Activated T-helper 1 cell treated with anti-CD3 and anti-CD28 coated beads, Interleukin-12 subunit alpha, Interleukin-12 subunit beta, Interleukin-2, Interleukin-4 antibody, amounts not matched to agents 30 ng/mL and 10 ng/mL and 1 ng/mL, durations not matched to agents 14 hours and 24 hours and 36 hours (primary cell): ENCODE measurements at regions of chr5 and their contacts with region 1.

Region 1: GRCh38 chr5:149317281-149318048 is 27.8 kb upstream of the GRPEL2 start:
- DNase-seq: no peak
- H3K4me3 Mint-ChIP-seq: no peak overlapping the region
- H3K27ac Mint-ChIP-seq: no peak overlapping the region
- H3K4me1 Mint-ChIP-seq: no peaks in the 10 kb centered on the region
- H3K27me3 Mint-ChIP-seq: no peaks in the 10 kb centered on the region

Region 2: DNA sequence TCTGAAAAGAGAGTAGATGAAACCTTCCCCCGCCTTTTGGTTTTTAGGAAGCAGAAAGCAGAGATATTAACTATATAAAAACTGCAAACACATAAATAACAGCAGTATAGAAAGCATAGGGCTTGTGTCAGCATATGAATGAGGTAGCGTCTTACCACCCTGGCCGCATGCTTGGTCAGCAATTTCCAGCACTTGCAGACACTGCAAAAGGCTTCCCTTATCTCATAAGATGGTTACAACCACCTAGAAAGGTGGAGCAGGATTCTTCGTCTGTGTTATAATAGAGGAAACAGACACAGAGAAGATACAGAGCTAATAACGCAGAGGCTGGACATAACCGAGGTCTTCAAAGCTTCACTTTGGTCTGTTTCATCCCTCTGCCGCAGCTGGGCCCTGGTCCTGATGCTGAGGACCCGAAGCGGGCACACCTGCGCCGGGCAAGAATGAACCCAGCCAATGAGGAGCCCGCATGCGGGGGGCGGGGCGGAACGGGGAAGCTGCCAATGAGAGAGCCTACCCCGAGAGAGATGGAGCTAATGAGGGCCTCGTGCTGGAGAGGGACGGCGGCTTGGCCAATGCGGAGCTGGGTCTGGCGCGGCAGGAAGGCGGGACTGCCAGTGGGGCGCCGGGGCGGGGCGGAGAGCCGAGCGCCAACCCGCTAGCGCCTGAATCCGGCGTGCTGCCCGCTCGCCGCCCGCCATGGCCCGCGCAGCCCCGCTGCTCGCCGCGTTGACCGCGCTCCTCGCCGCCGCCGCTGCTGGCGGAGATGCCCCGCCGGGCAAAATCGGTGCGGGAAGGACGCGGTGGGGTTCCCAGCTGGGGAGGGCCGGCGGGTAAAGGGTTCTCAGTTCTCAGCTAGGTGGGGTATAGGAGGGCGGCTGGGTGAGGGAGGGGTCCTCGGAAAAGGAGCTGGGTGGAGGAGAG is 40.2 kb after region 1 on chr5 and contains the start of gene PCYOX1L:
- intact Hi-C with region 1: loop called (anchors 1 kb)
- DNase-seq: peak; percentile 97
- H3K4me3 Mint-ChIP-seq: peak within 1 kb of the TSS; percentile 93
- H3K27ac Mint-ChIP-seq: peak within 1 kb of the TSS; percentile 84
- H3K4me1 Mint-ChIP-seq: peaks cover 67% of the 10 kb centered on the region
- H3K27me3 Mint-ChIP-seq: no peaks in the 10 kb centered on the region
- total RNA-seq, gene PCYOX1L: 21.9 and 23.4 TPM in 2 replicates

Region 3: GRCh38 chr5:149367249-149367971 is 49.9 kb after region 1 on chr5:
- intact Hi-C with region 1: loop called (anchors 1 kb)
- DNase-seq: peak; percentile 37
- H3K4me3 Mint-ChIP-seq: no peak overlapping the region
- H3K27ac Mint-ChIP-seq: no peak overlapping the region
- H3K4me1 Mint-ChIP-seq: peaks cover 17% of the 10 kb centered on the region
- H3K27me3 Mint-ChIP-seq: peaks cover 2% of the 10 kb centered on the region

Region 4: GRCh38 chr5:149434162-149435014 is 116.9 kb after region 1 on chr5:
- intact Hi-C with region 1: loop called (anchors 1 kb)
- DNase-seq: peak; percentile 21
- H3K4me3 Mint-ChIP-seq: no peak overlapping the region
- H3K27ac Mint-ChIP-seq: no peak overlapping the region
- H3K4me1 Mint-ChIP-seq: peaks cover 14% of the 10 kb centered on the region
- H3K27me3 Mint-ChIP-seq: no peaks in the 10 kb centered on the region